GM23248 (cell line): ENCODE measurements at regions of chr11 and their contacts with region 1.

Region 1: DNA sequence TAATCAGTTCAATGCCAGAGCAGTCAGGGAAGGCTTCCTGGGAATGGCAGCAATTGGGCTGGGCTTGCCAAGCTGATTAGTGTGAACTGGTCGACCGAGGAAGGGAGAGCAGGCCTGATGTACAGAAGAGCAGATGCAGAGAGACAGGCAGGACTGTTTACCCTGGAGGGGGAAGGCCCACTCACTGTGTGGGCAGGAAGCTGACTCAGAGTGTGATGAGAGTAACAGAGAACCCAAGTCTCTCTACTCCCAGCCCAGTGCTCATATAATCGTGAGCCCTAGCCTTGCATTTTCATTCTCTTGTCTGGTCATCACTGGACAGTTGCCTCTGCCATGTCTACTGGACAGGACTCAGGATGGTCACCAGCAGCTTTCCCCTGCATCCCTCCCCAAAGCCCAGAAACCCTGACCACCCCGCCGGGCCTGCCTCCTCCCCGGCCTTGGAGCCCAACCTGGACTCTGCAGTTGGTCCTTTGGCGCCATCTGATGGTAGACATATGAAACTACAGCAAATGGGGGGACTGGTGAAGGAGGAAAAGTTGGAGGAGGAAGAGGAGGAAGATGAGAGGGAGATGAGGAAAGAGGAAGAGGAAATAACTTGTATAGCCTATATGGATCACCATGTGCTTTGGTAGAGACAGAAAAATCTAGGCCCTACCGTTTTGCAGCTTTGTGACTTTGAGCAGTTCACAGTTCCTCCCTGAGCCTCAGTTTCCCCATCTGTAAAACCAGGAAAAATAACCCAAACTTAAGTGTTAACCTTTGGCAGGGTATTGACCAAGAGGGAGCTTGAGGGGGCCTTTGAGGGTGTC is 43.4 kb upstream of the PRDM11 start:
- DNase-seq: peak; percentile 89
- H3K4me3 ChIP-seq: peak overlapping the region; percentile 56
- H3K27ac ChIP-seq: peak overlapping the region; percentile 34; the same call in 1 of the 2 replicates
- H3K4me1 ChIP-seq: peaks cover 9% of the 10 kb centered on the region
- H3K27me3 ChIP-seq: peaks cover 3% of the 10 kb centered on the region; the same call in 1 of the 2 replicates

Region 2: DNA sequence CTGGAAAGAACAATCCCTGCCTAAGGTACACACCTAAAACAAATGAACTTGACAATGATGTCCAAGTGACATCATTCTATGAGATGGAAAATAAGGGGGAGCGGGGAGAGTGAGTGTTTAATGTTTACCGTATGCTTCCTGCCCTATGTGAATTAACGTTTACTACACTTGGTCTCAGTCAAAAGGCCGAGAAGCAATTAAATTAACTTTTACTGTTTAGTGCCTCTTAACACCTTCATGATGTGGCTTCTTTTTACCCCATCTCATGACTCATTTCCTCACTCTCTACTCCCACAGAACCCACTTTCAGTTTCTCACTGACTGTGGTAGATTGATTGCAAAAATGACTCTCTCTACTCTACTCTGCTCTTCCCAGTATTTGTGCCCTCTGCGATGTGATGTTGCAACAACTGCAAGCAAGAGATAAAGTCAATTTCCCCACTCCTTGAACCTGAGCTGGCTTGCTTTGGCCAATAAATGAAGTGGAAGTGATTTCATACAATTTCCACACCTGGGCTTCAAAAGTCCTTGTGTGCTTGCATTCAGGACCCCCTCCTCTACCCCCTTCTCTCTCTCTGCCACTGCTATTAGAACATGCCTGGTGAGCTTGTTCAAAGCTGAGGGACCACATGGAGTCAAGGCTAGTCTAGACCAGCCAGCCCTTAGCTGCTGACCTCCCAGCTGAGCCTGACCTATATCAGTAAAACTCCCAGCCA is 1234.0 kb before region 1 on chr11:
- in situ Hi-C with region 1: no loop called
- DNase-seq: peak; percentile 92
- H3K4me3 ChIP-seq: 0 out of 2 replicates have a peak overlapping the region, but pooled peaks have one; percentile 22
- H3K27ac ChIP-seq: peak overlapping the region; percentile 69
- H3K4me1 ChIP-seq: peaks cover 18% of the 10 kb centered on the region
- H3K27me3 ChIP-seq: peaks cover 13% of the 10 kb centered on the region

Region 3: GRCh38 chr11:44627911-44628729 is 474.9 kb before region 1 on chr11:
- in situ Hi-C with region 1: loop called (anchors 25 kb)
- DNase-seq: peak; percentile 50
- H3K4me3 ChIP-seq: no peak overlapping the region
- H3K27ac ChIP-seq: no peak overlapping the region
- H3K4me1 ChIP-seq: no peaks in the 10 kb centered on the region
- H3K27me3 ChIP-seq: 0 out of 2 replicates have a peak, but pooled peaks cover 16% of the 10 kb centered on the region

Region 4: DNA sequence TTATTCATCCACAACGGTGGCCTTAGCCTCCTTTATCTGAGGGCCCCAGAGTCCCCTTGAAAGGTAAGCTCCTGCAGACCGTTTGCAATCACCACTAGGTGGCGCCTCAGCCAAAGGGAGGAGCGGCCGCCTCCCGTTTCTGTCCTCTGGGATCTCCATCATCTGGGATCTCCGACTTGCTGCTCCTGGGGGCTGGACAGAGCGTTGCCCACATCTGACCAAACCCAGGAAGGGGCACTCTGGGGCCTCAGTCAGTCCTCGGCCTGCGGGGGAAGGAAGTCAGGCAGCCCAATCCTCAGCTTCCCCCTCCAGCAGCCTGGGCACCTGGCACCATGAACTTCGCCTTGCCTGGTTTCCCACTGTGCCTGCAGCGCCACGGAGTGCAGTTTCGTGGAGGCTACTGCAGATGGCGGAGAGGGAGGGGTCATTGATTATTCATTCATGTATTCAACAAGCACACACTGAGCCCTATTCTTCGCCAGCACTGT is 175.8 kb before region 1 on chr11:
- in situ Hi-C with region 1: loop called (anchors 5 kb)
- DNase-seq: peak; percentile 83
- H3K4me3 ChIP-seq: no peak overlapping the region
- H3K27ac ChIP-seq: no peak overlapping the region
- H3K4me1 ChIP-seq: no peaks in the 10 kb centered on the region
- H3K27me3 ChIP-seq: 0 out of 2 replicates have a peak, but pooled peaks cover 3% of the 10 kb centered on the region

Region 5: DNA sequence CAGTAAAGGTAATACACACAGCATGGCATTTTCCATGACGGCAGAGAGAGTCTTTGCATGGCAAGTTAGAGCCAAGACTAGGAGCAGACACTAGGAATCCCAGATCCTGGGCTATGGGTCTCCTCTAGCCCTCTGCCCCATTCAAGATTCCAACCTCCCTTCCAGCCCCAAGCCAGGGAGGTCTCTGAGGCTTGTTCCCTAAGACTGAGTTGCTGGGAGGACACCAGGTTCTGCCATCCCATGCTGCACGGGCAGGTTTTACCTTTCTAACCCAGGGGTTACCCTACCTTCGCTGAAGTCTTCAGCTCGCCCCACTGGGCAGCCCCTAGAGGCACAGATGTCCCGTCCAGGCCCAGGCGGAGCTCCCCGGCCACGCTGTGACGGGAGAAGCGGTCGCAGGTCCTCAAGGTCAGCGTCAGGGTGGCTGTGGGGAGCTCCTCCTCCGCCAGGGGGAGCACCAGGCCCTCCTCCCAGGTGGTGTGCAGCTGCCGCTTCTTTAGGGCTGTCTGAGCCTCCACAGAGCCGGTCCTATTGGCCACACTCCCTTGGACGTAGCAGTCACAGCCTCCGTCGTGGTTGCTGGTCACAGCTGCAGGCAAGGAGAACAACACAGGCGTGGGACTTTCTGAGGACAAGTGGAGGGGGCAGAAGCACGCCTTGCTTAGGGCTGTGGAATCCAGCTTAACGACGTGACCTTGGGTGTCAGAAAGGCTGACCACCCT is 149.3 kb after region 1 on chr11:
- in situ Hi-C with region 1: no loop called
- DNase-seq: peak; percentile 55
- H3K4me3 ChIP-seq: no peak overlapping the region
- H3K27ac ChIP-seq: no peak overlapping the region
- H3K4me1 ChIP-seq: no peaks in the 10 kb centered on the region
- H3K27me3 ChIP-seq: peaks cover 22% of the 10 kb centered on the region

Region 6: GRCh38 chr11:45846974-45847910 is 744.2 kb after region 1 on chr11 and contains the start of gene CRY2:
- in situ Hi-C with region 1: no loop called
- DNase-seq: peak; percentile 98
- H3K4me3 ChIP-seq: peak within 1 kb of the TSS; percentile 91
- H3K27ac ChIP-seq: peak within 1 kb of the TSS; percentile 96
- H3K4me1 ChIP-seq: peaks cover 23% of the 10 kb centered on the region
- H3K27me3 ChIP-seq: no peaks in the 10 kb centered on the region
- total RNA-seq, gene CRY2: 10.3 and 10.7 TPM in 2 replicates